Caco-2 (cell line): ENCODE measurements at regions of chr4 and their contacts with region 1.

Region 1: GRCh38 chr4:183098723-183099536 is at the start of gene WWC2:
- DNase-seq: peak; percentile 96
- H3K4me3 ChIP-seq: peak within 1 kb of the TSS; percentile 82
- H3K4me3 Mint-ChIP-seq: peak within 1 kb of the TSS; percentile 83
- H3K27ac Mint-ChIP-seq: peak within 1 kb of the TSS; percentile 92
- H3K4me1 ChIP-seq: peaks cover 37% of the 10 kb centered on the region
- H3K4me1 Mint-ChIP-seq: peaks cover 40% of the 10 kb centered on the region
- H3K27me3 ChIP-seq: no peaks in the 10 kb centered on the region
- H3K27me3 Mint-ChIP-seq: no peaks in the 10 kb centered on the region
- CTCF ChIP-seq: no peak
- total RNA-seq, gene WWC2: 120 and 126 TPM in 2 replicates

Region 2: GRCh38 chr4:183074296-183074990 is 24.5 kb before region 1 on chr4:
- CTCF ChIA-PET with region 1: interaction called, 14 read pairs
- POLR2A ChIA-PET with region 1: interaction called, 8 read pairs
- intact Hi-C with region 1: loop called (anchors 1 kb)
- DNase-seq: peak; percentile 37 to 52
- H3K4me3 ChIP-seq: no peak overlapping the region
- H3K4me3 Mint-ChIP-seq: peak overlapping the region; percentile 47
- H3K27ac Mint-ChIP-seq: peak overlapping the region; percentile 37
- H3K4me1 ChIP-seq: peaks cover 42% of the 10 kb centered on the region
- H3K4me1 Mint-ChIP-seq: peaks cover 42% of the 10 kb centered on the region
- H3K27me3 ChIP-seq: no peaks in the 10 kb centered on the region
- H3K27me3 Mint-ChIP-seq: no peaks in the 10 kb centered on the region
- CTCF ChIP-seq: no peak

Region 3: DNA sequence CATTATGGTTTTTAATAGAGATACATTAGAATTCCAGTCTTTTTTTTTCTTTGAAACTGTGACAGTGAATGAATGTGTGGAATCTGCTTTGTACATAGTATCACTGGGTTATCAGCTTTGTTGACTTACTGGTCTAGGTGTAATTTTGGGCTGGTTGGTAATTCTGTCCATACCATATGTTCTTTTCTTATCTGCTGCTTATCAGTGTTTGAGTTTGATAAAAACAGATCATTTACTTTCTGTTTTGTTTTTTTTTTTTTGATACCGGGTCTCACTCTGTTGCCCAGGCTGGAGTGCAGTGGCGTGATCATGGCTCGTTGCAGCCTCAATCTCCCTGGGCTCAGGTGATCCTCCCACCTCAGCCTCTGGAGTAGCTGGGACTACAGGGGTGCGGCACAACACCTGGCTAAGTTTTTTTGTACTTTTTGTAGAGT is 12.5 kb after region 1 on chr4:
- CTCF ChIA-PET with region 1: interaction called, 4 read pairs
- POLR2A ChIA-PET with region 1: interaction called, 8 read pairs
- intact Hi-C with region 1: loop called (anchors 1 kb)
- DNase-seq: peak; percentile 53 to 65
- H3K4me3 ChIP-seq: no peak overlapping the region
- H3K4me3 Mint-ChIP-seq: peak overlapping the region; percentile 68
- H3K27ac Mint-ChIP-seq: peak overlapping the region; percentile 81
- H3K4me1 ChIP-seq: peaks cover 84% of the 10 kb centered on the region
- H3K4me1 Mint-ChIP-seq: peaks cover 56% of the 10 kb centered on the region
- H3K27me3 ChIP-seq: no peaks in the 10 kb centered on the region
- H3K27me3 Mint-ChIP-seq: no peaks in the 10 kb centered on the region
- CTCF ChIP-seq: no peak

Region 4: GRCh38 chr4:183175631-183176232 is 76.8 kb after region 1 on chr4:
- CTCF ChIA-PET with region 1: no interaction called
- POLR2A ChIA-PET with region 1: no interaction called
- intact Hi-C with region 1: no loop called
- DNase-seq: no peak
- H3K4me3 ChIP-seq: no peak overlapping the region
- H3K4me3 Mint-ChIP-seq: peak overlapping the region; percentile 24
- H3K27ac Mint-ChIP-seq: no peak overlapping the region
- H3K4me1 ChIP-seq: peaks cover 66% of the 10 kb centered on the region
- H3K4me1 Mint-ChIP-seq: peaks cover 50% of the 10 kb centered on the region
- H3K27me3 ChIP-seq: no peaks in the 10 kb centered on the region
- H3K27me3 Mint-ChIP-seq: no peaks in the 10 kb centered on the region
- CTCF ChIP-seq: no peak

Region 5: DNA sequence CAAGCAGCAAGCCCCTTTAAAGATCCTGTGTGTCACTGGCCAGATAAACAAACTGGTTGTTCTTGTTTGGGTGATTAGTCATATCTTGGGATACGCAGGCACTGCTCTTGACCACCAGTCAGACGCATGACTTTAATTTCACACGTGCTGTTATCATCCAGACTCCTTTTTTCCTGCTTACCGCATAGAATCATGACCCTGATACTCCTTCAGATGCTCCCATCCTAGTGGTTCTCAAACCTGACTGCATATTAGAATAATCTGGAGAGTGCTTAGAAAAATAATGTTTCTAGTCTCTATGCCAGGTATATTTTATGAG is 142.4 kb after region 1 on chr4:
- CTCF ChIA-PET with region 1: interaction called, 5 read pairs
- POLR2A ChIA-PET with region 1: no interaction called
- intact Hi-C with region 1: loop called (anchors 5 kb)
- DNase-seq: peak in 1 of 2 experiments; percentile 33
- H3K4me3 ChIP-seq: no peak overlapping the region
- H3K4me3 Mint-ChIP-seq: peak overlapping the region; percentile 17
- H3K27ac Mint-ChIP-seq: peak overlapping the region; percentile 46
- H3K4me1 ChIP-seq: peaks cover 57% of the 10 kb centered on the region
- H3K4me1 Mint-ChIP-seq: peaks cover 43% of the 10 kb centered on the region
- H3K27me3 ChIP-seq: no peaks in the 10 kb centered on the region
- H3K27me3 Mint-ChIP-seq: no peaks in the 10 kb centered on the region
- CTCF ChIP-seq: no peak

Region 6: GRCh38 chr4:183255487-183255886 is 156.6 kb after region 1 on chr4:
- CTCF ChIA-PET with region 1: no interaction called
- POLR2A ChIA-PET with region 1: interaction called, 10 read pairs
- intact Hi-C with region 1: loop called (anchors 1 kb)
- DNase-seq: no peak
- H3K4me3 ChIP-seq: no peak overlapping the region
- H3K4me3 Mint-ChIP-seq: no peak overlapping the region
- H3K27ac Mint-ChIP-seq: peak overlapping the region; percentile 48
- H3K4me1 ChIP-seq: peaks cover 40% of the 10 kb centered on the region
- H3K4me1 Mint-ChIP-seq: peaks cover 15% of the 10 kb centered on the region
- H3K27me3 ChIP-seq: no peaks in the 10 kb centered on the region
- H3K27me3 Mint-ChIP-seq: no peaks in the 10 kb centered on the region
- CTCF ChIP-seq: no peak